ENCODE measurements at regions of chr11 and their contacts with region 1.

Region 1: GRCh38 chr11:119779195-119780101 is 50.4 kb upstream of the NECTIN1 start:
- DNase-seq: peak; percentile 83

Region 2: DNA sequence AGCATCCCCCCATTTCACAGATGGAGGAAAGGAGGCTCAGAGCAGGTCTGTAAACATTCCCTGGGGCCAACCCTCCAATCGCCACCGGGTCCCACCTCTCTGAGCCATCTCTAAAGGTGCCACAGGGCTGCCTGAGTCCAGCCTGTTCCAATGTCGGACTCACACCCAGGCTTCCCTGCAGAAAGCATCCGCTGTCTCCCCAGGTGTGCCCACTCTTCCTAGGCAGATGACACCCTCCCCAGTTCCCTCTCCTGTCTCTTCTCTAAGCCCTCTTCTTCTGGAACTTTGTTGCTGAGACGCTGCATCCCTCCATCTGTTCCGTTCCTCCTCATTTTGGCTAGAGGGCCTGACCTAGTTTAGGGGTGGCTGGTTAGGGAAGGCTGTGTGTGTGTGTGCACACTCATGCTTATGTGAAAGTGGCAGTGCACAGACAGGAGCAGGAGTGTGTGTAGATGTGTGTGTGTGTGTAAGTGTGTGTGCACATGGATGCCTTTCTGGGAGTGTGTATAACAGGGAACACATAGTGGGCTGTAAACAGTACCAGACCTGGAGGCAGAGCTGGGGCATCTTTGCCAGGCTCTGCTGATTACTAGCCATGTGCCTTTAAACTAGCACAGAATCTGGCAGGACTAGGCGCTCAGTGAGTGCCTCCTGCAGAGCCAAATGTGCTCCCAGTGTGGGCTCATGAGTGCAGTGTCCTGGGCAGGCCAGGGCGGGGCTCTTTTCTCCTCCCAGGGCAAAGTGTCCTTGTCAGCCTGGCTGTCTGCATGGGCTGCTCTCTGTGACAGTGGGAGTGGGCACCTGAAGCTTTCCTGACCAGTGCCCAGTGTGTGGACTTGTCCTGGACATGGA is 26.8 kb after region 1 on chr11:
- intact Hi-C with region 1: loop called (anchors 2 kb)
- DNase-seq: no peak

Region 3: GRCh38 chr11:119854521-119854920 is 75.1 kb after region 1 on chr11:
- intact Hi-C with region 1: no loop called
- DNase-seq: no peak

Region 4: GRCh38 chr11:119891055-119891768 is 111.8 kb after region 1 on chr11:
- intact Hi-C with region 1: loop called (anchors 1 kb)
- DNase-seq: peak; percentile 81

Region 5: GRCh38 chr11:120024046-120024445 is 244.6 kb after region 1 on chr11:
- intact Hi-C with region 1: no loop called
- DNase-seq: peak; percentile 17

Measured in cardiac septum (tissue), 1 donor.